ENCODE measurements at regions of chr12 and their contacts with region 1.

Region 1: GRCh38 chr12:57846577-57847319 is at the start of gene CTDSP2:
- DNase-seq: peak; percentile 95 to 100
- H3K4me3 ChIP-seq: peak within 1 kb of the TSS; percentile 86 to 98 (median 94)
- H3K27ac ChIP-seq: peak within 1 kb of the TSS; percentile 99
- H3K4me1 ChIP-seq: peaks cover 6 to 35% (median 21%) of the 10 kb centered on the region in 4 experiments
- H3K27me3 ChIP-seq: peaks cover 0 to 3% (median under 1%) of the 10 kb centered on the region in 4 experiments; a peak in 2 of 7 replicates
- CTCF ChIP-seq: no peak
- EP300 ChIP-seq: no peak; a peak in 1 of 3 replicates
- POLR2A ChIP-seq: peak; percentile 69 to 70
- RAD21 ChIP-seq: peak; percentile 11; a peak in 1 of 4 replicates
- total RNA-seq, gene CTDSP2: 91.7 and 93.7 TPM in 2 replicates

Region 2: GRCh38 chr12:57765042-57765697 is 81.6 kb before region 1 on chr12:
- CTCF ChIA-PET with region 1: interaction called, 3 read pairs
- POLR2A ChIA-PET with region 1: interaction called, 11 read pairs
- DNase-seq: peak in 1 of 2 experiments; percentile 80
- H3K4me3 ChIP-seq: peak overlapping the region; percentile 39 to 66 (median 64)
- H3K27ac ChIP-seq: no peak overlapping the region
- H3K4me1 ChIP-seq: peaks cover 13 to 22% (median 19%) of the 10 kb centered on the region in 4 experiments
- H3K27me3 ChIP-seq: peaks cover 22 to 39% (median 37%) of the 10 kb centered on the region in 4 experiments
- CTCF ChIP-seq: peak in 2 of 3 experiments; percentile 41 to 61; a peak in 3 of 4 replicates
- EP300 ChIP-seq: no peak
- POLR2A ChIP-seq: no peak; a peak in 1 of 3 replicates
- RAD21 ChIP-seq: peak; percentile 1 to 18; a peak in 2 of 4 replicates

Region 3: DNA sequence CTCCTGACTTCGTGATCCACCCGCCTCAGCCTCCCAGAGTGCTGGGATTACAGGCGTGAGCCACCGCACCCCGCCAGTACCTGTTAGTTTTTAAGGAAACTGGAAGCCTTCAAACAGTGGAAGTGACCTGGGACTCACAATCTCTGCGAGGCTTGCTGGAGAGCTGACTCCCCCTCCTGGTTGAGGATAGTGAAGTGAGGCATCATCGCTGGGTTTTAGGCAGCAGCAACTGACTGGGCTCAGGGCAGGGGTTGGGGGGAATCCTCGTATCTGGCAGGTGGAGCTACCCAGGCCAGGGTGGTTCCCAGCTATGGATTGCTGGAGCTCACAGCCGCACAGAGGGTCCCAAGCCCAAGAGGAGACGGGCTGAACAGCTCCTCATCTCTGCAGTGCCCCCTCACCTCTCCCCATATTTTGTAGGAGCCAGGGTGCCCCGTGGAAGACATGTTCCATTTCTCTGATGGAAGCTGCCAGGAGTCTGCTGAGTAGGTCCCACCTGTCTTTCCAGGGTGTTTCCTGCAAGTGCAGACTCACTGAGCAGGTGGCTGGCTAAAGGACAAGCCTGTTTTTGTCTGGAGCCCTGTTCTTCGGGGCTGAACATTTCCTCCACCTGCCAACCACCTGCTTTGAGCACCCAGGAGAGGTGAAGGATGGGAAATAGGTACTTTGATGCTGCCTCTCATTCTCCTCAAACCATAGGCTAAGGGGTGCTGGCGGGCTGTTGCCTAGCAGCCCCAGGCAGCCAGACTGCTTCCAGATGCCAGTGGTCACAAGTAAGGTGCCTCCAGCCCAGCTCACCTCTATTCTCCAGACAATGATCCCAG is 31.4 kb before region 1 on chr12:
- CTCF ChIA-PET with region 1: interaction called, 7 read pairs
- POLR2A ChIA-PET with region 1: interaction called, 37 read pairs
- DNase-seq: peak; percentile 50 to 62
- H3K4me3 ChIP-seq: no peak overlapping the region
- H3K27ac ChIP-seq: no peak overlapping the region
- H3K4me1 ChIP-seq: no peaks in the 10 kb centered on the region
- H3K27me3 ChIP-seq: no peaks in the 10 kb centered on the region
- CTCF ChIP-seq: peak; percentile 63 to 70 (median 67)
- EP300 ChIP-seq: no peak
- POLR2A ChIP-seq: no peak
- RAD21 ChIP-seq: peak; percentile 57 to 70

Region 4: DNA sequence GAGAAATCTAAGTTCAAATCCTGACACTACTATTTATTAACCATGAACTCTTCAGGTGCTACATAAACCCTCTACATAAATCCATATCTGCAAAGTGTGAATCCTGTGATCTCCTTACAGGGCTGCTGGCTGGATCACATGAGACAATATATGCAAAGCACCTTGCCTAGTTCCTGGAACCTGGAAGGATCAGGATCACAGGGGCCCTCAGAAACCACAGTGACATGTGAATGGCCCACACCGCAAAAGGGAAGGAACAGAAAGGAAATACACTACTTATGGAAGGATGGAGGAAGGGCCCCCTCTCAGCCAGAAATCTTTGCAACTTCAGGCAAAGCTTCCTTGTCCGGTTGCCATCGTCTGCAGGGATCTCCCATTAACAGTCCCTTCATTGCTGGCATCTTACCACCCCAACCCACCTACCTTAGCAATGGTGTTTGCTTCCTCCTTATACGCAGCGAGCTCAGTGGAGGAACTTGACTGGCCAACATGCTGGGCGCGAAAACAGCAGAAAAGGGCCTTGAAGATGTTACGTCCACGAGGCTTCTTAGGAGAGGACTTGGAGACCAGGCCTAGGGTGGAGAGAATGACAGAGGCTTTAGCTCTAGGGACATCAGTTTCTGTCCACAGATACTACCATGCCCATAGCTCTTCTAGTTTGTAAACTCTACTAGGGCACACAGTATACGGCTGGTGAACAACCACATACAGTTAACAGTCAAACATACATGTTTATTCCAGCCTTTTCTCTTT is 17.5 kb before region 1 on chr12:
- CTCF ChIA-PET with region 1: interaction called, 44 read pairs
- POLR2A ChIA-PET with region 1: interaction called, 722 read pairs
- DNase-seq: no peak
- H3K4me3 ChIP-seq: no peak overlapping the region
- H3K27ac ChIP-seq: no peak overlapping the region; the same call in 1 of the 2 replicates
- H3K4me1 ChIP-seq: peaks cover 7 to 20% (median 9%) of the 10 kb centered on the region in 4 experiments
- H3K27me3 ChIP-seq: no peaks in the 10 kb centered on the region
- CTCF ChIP-seq: no peak
- EP300 ChIP-seq: no peak
- POLR2A ChIP-seq: no peak
- RAD21 ChIP-seq: no peak

Region 5: DNA sequence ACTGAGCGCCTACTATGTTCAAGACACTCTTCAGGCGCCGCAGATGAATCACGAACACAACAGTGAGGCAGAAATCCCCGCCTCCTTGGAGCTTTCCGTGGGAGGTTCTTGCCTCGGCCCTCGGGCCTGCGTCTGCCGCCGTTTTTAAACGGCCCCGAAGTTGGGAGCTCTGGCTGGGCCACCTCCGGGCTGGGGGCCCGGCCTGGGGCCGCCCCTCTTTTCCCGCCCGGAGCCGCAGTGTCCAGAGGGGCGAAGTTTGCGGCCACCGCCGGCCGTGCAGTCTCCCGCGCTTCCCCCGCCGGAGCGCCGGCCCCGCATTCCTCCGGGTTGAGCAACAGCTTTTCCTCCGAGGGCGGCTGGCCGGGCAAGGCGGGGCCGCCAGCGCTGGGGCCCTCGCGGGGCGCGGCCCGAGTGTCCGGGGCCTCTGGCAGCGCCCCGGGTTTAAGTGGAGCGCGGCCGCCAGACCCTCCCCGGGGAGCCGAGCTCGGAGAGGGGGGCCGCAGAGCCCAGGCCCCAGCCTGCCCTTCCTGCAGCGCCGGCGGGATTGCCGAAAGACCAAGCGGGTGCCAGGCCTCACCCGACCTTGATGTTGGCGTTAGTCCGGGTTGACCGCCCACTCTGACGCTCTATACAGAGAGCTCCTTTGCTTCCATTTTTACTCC is 18.5 kb after region 1 on chr12:
- CTCF ChIA-PET with region 1: interaction called, 58 read pairs
- POLR2A ChIA-PET with region 1: interaction called, 722 read pairs
- DNase-seq: peak in 1 of 2 experiments; percentile 73
- H3K4me3 ChIP-seq: peak overlapping the region; percentile 25 to 65 (median 41)
- H3K27ac ChIP-seq: no peak overlapping the region
- H3K4me1 ChIP-seq: peaks cover 0 to 12% (median 8%) of the 10 kb centered on the region in 4 experiments; a peak in 5 of 7 replicates
- H3K27me3 ChIP-seq: peaks cover 0 to 20% (median 10%) of the 10 kb centered on the region in 4 experiments; a peak in 5 of 7 replicates
- CTCF ChIP-seq: no peak
- EP300 ChIP-seq: no peak
- POLR2A ChIP-seq: peak in 1 of 2 experiments; percentile 55; a peak in 1 of 3 replicates
- RAD21 ChIP-seq: no peak

Region 6: DNA sequence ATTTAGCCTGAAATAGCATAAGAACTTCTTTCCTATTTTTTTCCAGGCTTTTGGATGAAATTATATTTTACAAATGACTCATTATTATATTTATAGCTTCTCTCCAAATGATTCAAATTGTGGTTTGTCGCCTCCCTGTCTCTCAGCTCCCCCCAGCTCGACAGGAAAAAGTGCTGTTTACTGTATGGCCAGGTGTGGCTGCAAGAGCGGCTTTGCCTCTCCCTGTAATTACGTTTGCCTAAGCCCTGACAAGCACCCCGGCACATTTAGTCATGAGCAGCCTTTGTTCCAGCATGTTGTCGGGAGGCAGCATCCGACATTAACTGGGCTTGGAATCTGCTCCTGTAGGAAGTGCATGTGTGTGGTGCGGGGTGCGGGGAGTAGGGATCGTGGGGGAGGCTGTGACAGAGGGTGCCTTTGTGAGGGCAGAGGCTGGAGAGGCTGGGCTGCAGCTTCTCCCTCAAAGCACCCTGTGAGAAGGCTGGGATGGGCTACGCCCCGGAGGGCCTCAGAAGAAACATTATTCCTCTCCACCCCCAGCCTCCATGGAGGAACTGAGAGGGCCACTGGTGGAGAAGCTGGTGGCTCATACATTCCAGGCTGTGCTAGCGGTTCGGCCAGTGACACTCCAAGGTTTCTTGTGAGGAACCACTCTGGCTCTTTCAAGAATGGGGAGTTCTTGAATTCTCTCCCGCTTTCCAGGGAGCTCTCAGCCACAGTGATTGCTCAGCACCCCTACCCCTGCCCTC is 41.8 kb after region 1 on chr12:
- CTCF ChIA-PET with region 1: interaction called, 48 read pairs
- POLR2A ChIA-PET with region 1: interaction called, 181 read pairs
- DNase-seq: no peak
- H3K4me3 ChIP-seq: peak overlapping the region in 3 of 4 experiments; percentile 4 to 23 (median 19); a peak in 3 of 8 replicates
- H3K27ac ChIP-seq: peak overlapping the region; percentile 4; the same call in 1 of the 2 replicates
- H3K4me1 ChIP-seq: peaks cover 2 to 22% (median 17%) of the 10 kb centered on the region in 4 experiments
- H3K27me3 ChIP-seq: no peaks in the 10 kb centered on the region; a peak in 1 of 7 replicates
- CTCF ChIP-seq: no peak
- EP300 ChIP-seq: no peak
- POLR2A ChIP-seq: peak in 1 of 2 experiments; percentile 59; a peak in 2 of 3 replicates
- RAD21 ChIP-seq: no peak

Region 7: GRCh38 chr12:57904848-57905811 is 58.4 kb after region 1 on chr12:
- CTCF ChIA-PET with region 1: interaction called, 49 read pairs
- POLR2A ChIA-PET with region 1: interaction called, 181 read pairs
- DNase-seq: peak; percentile 64 to 95
- H3K4me3 ChIP-seq: no peak overlapping the region
- H3K27ac ChIP-seq: no peak overlapping the region
- H3K4me1 ChIP-seq: no peaks in the 10 kb centered on the region
- H3K27me3 ChIP-seq: peaks cover 0 to 4% (median 0%) of the 10 kb centered on the region in 4 experiments; a peak in 4 of 7 replicates
- CTCF ChIP-seq: peak; percentile 99 to 100 (median 100)
- EP300 ChIP-seq: no peak
- POLR2A ChIP-seq: no peak
- RAD21 ChIP-seq: peak; percentile 99

Measured in H1 (cell line).